Ascending aorta (tissue), 2 donors: ENCODE measurements at regions of chr9 and their contacts with region 1.

Region 1: GRCh38 chr9:4792572-4793458 is at the start of gene RCL1:
- DNase-seq: peak; percentile 83 to 97
- H3K4me3 ChIP-seq: peak within 1 kb of the TSS; percentile 75 to 77
- H3K27ac ChIP-seq: peak within 1 kb of the TSS; percentile 89 to 93
- H3K4me1 ChIP-seq: peaks cover 0 to 4% of the 10 kb centered on the region in 2 donors
- H3K27me3 ChIP-seq: no peaks in the 10 kb centered on the region
- CTCF ChIP-seq: no peak
- total RNA-seq, gene RCL1: 28.3 TPM

Region 2: DNA sequence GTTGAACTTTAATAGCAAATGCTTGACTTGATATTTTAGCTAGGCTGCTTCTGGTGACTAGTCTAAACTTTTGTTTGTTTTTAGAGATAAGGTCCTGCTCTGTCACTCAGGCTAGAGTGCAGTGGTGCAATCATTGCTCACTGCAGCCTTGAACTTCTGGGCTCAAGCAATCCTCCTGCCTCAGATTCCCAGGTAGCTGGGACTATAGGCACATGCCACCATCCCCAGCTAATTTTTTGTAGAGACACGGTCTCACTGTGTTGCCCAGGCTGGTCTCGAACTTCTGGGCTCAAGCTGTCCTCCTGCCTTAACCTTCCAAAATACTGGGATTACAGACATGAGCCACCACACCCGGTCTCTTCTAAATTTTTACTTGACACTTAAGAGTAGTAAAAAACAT is 92.7 kb before region 1 on chr9:
- intact Hi-C with region 1: no loop called
- DNase-seq: no peak
- H3K4me3 ChIP-seq: no peak overlapping the region
- H3K27ac ChIP-seq: no peak overlapping the region
- H3K4me1 ChIP-seq: no peaks in the 10 kb centered on the region
- H3K27me3 ChIP-seq: no peaks in the 10 kb centered on the region
- CTCF ChIP-seq: no peak

Region 3: DNA sequence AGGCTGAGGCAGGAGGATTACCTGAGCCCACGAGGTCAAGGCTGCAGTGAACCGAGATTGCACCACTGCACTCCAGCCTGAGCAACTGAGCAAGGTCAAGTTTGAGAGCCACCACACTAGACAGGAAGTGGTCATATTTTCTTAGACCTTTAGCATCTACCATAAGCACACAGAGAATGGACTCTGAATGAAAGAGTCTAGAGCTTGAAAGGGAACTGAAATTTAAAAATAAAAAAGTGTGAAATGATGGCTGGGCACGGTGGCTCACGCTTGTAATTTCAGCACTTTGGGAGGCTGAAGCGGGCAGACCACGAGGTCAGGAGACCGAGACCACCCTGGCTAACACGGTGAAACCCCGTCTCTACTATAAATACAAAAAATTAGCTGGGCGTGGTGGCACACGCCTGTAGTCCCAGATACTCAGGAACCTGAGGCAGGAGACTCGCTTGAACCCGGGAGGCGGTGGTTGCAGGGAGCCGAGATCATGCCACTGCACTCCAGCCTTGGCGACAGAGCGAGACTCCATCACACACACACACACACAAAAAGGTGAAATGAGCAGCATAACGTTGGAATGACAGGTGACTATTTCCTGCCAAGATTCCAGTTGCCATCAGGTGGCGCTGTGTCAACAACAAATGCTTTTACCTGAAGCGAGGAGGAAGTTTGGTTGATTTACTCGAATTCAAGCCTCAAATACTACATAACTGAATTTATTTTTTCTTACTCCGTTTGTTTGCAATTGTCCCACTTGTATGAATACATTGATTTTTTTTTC is 30.5 kb before region 1 on chr9:
- intact Hi-C with region 1: loop called (anchors 2 kb)
- DNase-seq: peak in 1 of 2 donors; percentile 86
- H3K4me3 ChIP-seq: peak overlapping the region; percentile 37 to 38
- H3K27ac ChIP-seq: peak overlapping the region; percentile 9 to 36
- H3K4me1 ChIP-seq: peaks cover 0 to 2% of the 10 kb centered on the region in 2 donors
- H3K27me3 ChIP-seq: no peaks in the 10 kb centered on the region
- CTCF ChIP-seq: peak; percentile 72 to 78 (median 78)

Region 4: GRCh38 chr9:4774209-4774608 is 18.6 kb before region 1 on chr9:
- intact Hi-C with region 1: loop called (anchors 1 kb)
- DNase-seq: peak in 1 of 2 donors; percentile 78
- H3K4me3 ChIP-seq: no peak overlapping the region
- H3K27ac ChIP-seq: no peak overlapping the region
- H3K4me1 ChIP-seq: no peaks in the 10 kb centered on the region
- H3K27me3 ChIP-seq: no peaks in the 10 kb centered on the region
- CTCF ChIP-seq: no peak

Region 5: DNA sequence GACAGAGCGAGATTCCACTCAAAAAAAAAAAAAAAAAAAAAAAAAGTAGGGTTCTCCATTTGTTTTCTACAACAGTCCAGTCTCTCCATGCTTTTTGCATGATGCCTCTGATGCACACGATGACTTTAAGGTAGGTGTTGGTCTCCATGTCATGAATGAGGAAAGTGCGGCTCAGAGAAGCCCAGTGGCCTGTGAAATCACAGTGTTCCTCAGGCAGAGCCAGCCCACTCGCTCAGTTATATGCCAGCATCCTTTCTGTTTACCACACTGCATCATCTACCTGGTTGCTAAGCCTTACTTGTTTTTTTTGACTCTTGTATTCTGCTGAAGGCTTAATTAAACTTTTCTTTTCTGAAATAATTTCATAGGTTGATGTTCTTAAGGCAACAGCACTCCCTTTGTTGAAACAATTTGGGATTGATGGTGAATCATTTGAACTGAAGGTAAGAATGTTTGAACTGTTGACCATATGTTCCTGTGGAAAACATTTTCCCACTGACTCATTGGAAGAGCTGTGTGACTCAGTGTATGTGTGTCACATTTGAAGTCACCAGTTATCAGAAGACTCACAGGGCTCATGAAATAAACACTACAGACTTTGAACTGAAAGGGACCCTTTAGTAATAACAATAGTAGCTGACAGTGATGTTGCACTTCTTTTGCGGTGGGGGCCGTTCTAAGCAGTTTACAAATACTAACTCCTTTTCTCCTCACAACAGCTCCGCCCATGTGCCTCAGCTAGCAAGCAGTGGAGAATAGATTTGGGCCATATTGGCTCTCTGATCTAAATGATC is 40.2 kb after region 1 on chr9:
- intact Hi-C with region 1: loop called (anchors 2 kb)
- DNase-seq: no peak
- H3K4me3 ChIP-seq: no peak overlapping the region
- H3K27ac ChIP-seq: peak overlapping the region in 1 of 2 donors; percentile 19
- H3K4me1 ChIP-seq: peaks cover 4 to 26% of the 10 kb centered on the region in 2 donors
- H3K27me3 ChIP-seq: no peaks in the 10 kb centered on the region
- CTCF ChIP-seq: no peak

Region 6: GRCh38 chr9:4939118-4939561 is 146.3 kb after region 1 on chr9:
- intact Hi-C with region 1: loop called (anchors 5 kb)
- DNase-seq: no peak
- H3K4me3 ChIP-seq: no peak overlapping the region
- H3K27ac ChIP-seq: peak overlapping the region; percentile 61 to 65
- H3K4me1 ChIP-seq: peaks cover 4 to 36% of the 10 kb centered on the region in 2 donors
- H3K27me3 ChIP-seq: no peaks in the 10 kb centered on the region
- CTCF ChIP-seq: no peak

Region 7: DNA sequence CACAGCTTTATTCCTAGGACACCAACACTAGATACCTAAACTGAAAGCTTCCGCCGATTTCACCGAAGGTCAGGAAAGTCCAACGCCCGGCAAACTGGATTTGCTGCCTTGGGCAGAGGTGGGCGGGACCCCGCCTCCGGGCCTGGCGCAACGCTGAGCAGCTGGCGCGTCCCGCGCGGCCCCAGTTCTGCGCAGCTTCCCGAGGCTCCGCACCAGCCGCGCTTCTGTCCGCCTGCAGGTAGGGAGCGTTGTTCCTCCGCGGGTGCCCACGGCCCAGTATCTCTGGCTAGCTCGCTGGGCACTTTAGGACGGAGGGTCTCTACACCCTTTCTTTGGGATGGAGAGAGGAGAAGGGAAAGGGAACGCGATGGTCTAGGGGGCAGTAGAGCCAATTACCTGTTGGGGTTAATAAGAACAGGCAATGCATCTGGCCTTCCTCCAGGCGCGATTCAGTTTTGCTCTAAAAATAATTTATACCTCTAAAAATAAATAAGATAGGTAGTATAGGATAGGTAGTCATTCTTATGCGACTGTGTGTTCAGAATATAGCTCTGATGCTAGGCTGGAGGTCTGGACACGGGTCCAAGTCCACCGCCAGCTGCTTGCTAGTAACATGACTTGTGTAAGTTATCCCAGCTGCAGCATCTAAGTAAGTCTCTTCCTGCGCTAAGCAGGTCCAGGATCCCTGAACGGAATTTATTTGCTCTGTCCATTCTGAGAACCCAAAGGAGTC is 657.7 kb after region 1 on chr9 and contains the start of gene CD274:
- intact Hi-C with region 1: loop called (anchors 2 kb)
- DNase-seq: peak; percentile 56 to 94
- H3K4me3 ChIP-seq: peak within 1 kb of the TSS; percentile 60 to 72
- H3K27ac ChIP-seq: peak within 1 kb of the TSS; percentile 79 to 80
- H3K4me1 ChIP-seq: peaks cover 3 to 30% of the 10 kb centered on the region in 2 donors
- H3K27me3 ChIP-seq: no peaks in the 10 kb centered on the region
- CTCF ChIP-seq: peak; percentile 67 to 85 (median 80)
- total RNA-seq, gene CD274: 23.8 TPM

Region 8: DNA sequence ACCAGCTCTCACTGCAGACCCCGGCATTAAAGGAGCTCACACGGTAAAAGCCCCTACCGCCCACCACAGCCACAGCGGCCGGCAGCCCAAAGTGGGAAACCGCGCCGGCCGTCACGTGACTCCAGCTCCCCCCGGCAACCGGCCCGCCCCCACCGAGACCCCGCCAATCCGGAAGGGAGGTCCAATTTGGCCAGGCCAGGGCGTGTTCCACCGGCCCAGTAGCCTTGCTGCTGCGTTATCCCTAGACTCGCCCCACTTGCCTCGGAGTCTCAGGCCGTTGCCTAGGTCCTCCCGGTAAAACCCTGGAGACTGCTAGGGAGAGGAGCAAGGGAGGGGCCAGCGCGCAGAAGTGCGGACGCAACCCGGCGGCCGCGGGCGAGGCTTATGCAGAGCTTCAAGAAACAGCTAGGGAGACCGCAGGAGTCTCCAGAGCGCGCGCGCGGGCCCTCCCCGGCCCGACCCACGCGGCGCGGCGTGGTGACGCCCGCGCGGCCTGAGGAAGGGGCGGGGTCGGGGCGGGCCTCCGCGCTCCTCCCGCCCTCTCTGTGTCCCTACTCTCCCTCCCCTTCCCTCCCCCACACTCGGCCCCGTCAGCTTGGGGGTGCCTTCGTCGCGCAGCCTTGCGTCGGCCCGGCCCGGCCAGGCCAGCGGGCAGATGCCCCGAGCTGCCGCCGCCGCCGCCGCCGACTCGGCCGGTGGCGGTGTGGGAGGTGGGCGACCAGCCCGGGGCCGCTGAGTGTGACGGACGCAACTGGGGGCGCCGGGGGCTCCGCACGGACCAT is 835.9 kb after region 1 on chr9 and contains the start of gene RIC1:
- intact Hi-C with region 1: loop called (anchors 5 kb)
- DNase-seq: peak; percentile 77 to 95
- H3K4me3 ChIP-seq: peak within 1 kb of the TSS; percentile 93 to 98
- H3K27ac ChIP-seq: peak within 1 kb of the TSS; percentile 95 to 99
- H3K4me1 ChIP-seq: peaks cover 5 to 43% of the 10 kb centered on the region in 2 donors
- H3K27me3 ChIP-seq: no peaks in the 10 kb centered on the region
- CTCF ChIP-seq: no peak
- total RNA-seq, gene RIC1: 46.7 TPM